ENCODE measurements at regions of chr10 and their contacts with region 1.

Region 1: DNA sequence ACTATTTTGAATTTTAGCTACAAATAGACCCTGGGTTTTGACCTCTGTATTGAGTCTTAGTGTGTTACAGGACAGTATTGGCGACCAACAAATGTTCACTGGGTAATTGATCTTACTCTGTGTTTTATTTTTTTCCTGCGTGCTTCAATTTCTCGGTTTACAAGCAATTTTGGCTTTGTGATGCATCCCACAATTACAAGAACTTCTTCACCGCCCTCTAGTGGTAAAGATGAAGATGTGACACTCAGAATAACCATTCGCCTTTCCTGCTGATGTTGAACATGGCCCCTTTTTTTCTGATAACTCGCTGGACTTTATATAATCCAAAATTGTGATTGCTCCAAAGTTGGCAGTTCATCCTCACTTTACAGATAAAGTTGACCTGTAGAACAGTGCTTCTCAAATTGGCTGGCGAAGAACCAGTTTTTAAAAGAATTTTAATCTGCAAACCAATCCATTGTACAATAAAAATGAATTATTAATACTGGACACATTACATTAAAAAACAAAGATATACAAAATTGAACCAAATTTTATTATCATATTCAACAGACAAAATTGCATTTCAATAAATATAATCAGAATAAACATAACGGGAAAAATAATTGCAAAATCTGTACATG is 20.2 kb upstream of the SMC3 start:
- DNase-seq: no peak
- H3K4me3 ChIP-seq: no peak overlapping the region
- H3K27me3 ChIP-seq: peaks cover 2% of the 10 kb centered on the region; the same call in 1 of the 2 replicates
- CTCF ChIP-seq: peak; percentile 74

Region 2: GRCh38 chr10:110203500-110204455 is 343.5 kb before region 1 on chr10:
- CTCF ChIA-PET with region 1: no interaction called
- POLR2A ChIA-PET with region 1: no interaction called
- DNase-seq: no peak
- H3K4me3 ChIP-seq: no peak overlapping the region
- H3K27me3 ChIP-seq: peaks cover 6% of the 10 kb centered on the region
- CTCF ChIP-seq: no peak

Region 3: GRCh38 chr10:110304780-110305421 is 242.3 kb before region 1 on chr10 and contains the start of gene SMNDC1:
- CTCF ChIA-PET with region 1: interaction called, 116 read pairs
- POLR2A ChIA-PET with region 1: interaction called, 3 read pairs
- DNase-seq: peak; percentile 88
- H3K4me3 ChIP-seq: peak within 1 kb of the TSS; percentile 91
- H3K27me3 ChIP-seq: no peaks in the 10 kb centered on the region
- CTCF ChIP-seq: no peak
- polyA plus RNA-seq, gene SMNDC1: 6.1 and 13.4 TPM in 2 replicates

Region 4: GRCh38 chr10:110312206-110312605 is 235.0 kb before region 1 on chr10:
- CTCF ChIA-PET with region 1: interaction called, 116 read pairs
- POLR2A ChIA-PET with region 1: interaction called, 3 read pairs
- DNase-seq: no peak
- H3K4me3 ChIP-seq: no peak overlapping the region
- H3K27me3 ChIP-seq: no peaks in the 10 kb centered on the region
- CTCF ChIP-seq: no peak

Region 5: GRCh38 chr10:110497438-110498086 is 49.7 kb before region 1 on chr10 and contains the start of gene DUSP5:
- CTCF ChIA-PET with region 1: interaction called, 10 read pairs
- POLR2A ChIA-PET with region 1: no interaction called
- DNase-seq: no peak
- H3K4me3 ChIP-seq: peak within 1 kb of the TSS; percentile 71
- H3K27me3 ChIP-seq: no peaks in the 10 kb centered on the region
- CTCF ChIP-seq: no peak
- polyA plus RNA-seq, gene DUSP5: 30.3 and 30.4 TPM in 2 replicates

Region 6: GRCh38 chr10:110563132-110563531 is 15.9 kb after region 1 on chr10:
- CTCF ChIA-PET with region 1: interaction called, 10 read pairs
- POLR2A ChIA-PET with region 1: no interaction called
- DNase-seq: no peak
- H3K4me3 ChIP-seq: no peak overlapping the region
- H3K27me3 ChIP-seq: no peaks in the 10 kb centered on the region
- CTCF ChIP-seq: no peak

Measured in BJ (cell line).